H1 (cell line): ENCODE measurements at regions of chr1 and their contacts with region 1.

Region 1: GRCh38 chr1:175434283-175434860 is 241.8 kb upstream of the KIAA0040 start:
- DNase-seq: peak; percentile 17 to 80
- H3K4me3 ChIP-seq: no peak overlapping the region
- H3K27ac ChIP-seq: no peak overlapping the region
- H3K4me1 ChIP-seq: no peaks in the 10 kb centered on the region
- H3K27me3 ChIP-seq: no peaks in the 10 kb centered on the region
- CTCF ChIP-seq: peak; percentile 75 to 88 (median 85)
- EP300 ChIP-seq: no peak
- POLR2A ChIP-seq: no peak
- RAD21 ChIP-seq: peak; percentile 62 to 69

Region 2: GRCh38 chr1:175419744-175420546 is 14.4 kb before region 1 on chr1:
- CTCF ChIA-PET with region 1: interaction called, 46 read pairs
- POLR2A ChIA-PET with region 1: no interaction called
- DNase-seq: no peak
- H3K4me3 ChIP-seq: no peak overlapping the region
- H3K27ac ChIP-seq: no peak overlapping the region
- H3K4me1 ChIP-seq: no peaks in the 10 kb centered on the region; a peak in 1 of 7 replicates
- H3K27me3 ChIP-seq: no peaks in the 10 kb centered on the region
- CTCF ChIP-seq: no peak
- EP300 ChIP-seq: no peak
- POLR2A ChIP-seq: no peak
- RAD21 ChIP-seq: no peak

Region 3: DNA sequence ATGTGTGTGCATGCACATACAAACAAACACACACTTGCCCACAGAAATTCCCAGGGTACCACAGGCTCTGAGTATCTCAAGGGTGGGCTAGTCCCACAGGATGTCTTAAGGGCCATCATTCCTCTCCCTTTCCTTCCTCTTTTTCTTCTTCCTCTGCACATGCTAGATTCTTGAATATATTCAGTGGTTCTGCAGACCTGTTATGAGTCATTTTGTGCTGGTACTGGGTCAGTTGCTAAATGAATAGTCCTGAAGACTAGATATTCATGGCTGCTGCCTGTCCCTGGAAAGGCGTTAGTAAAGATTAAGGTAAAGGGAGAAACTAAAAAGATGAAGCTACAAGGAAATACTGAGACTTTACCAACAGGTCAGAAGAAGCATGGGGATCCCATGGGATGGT is 14.9 kb after region 1 on chr1:
- CTCF ChIA-PET with region 1: interaction called, 27 read pairs
- POLR2A ChIA-PET with region 1: no interaction called
- DNase-seq: no peak
- H3K4me3 ChIP-seq: no peak overlapping the region
- H3K27ac ChIP-seq: no peak overlapping the region
- H3K4me1 ChIP-seq: peaks cover 0 to 3% (median 0%) of the 10 kb centered on the region in 4 experiments; a peak in 1 of 7 replicates
- H3K27me3 ChIP-seq: no peaks in the 10 kb centered on the region; a peak in 1 of 7 replicates
- CTCF ChIP-seq: no peak
- EP300 ChIP-seq: no peak
- POLR2A ChIP-seq: no peak
- RAD21 ChIP-seq: no peak

Region 4: DNA sequence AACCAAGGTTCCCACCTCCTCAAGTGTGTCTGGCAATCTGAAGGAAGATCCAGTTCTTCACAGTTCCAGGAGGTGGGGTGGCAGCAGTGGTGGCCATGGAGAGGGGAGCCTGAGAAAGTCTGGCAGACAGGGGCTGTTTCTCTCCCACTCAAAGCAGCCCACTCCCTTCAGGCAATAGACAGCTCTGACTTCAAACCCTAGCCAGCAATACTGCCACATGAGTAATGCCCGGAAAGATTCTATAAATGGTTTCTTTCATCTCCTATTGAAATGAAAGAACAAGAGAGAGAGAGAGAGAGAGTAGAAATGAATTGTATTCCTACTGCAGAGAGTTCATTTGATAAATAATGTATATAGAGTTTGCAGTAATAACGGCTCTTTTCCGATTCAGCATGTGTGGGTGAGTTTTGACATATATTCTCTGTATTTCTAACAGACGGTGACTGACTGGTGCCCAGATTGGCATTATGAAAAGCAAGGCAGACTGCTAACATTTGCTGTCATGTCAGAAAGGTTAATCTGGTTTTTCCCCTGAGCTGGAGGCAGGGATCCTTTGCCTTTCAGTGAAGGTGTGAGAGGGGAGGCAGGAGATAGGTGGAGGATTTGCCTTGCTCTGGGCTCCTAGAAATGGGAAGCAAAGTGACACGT is 25.3 kb after region 1 on chr1:
- CTCF ChIA-PET with region 1: interaction called, 11 read pairs
- POLR2A ChIA-PET with region 1: no interaction called
- DNase-seq: no peak
- H3K4me3 ChIP-seq: no peak overlapping the region
- H3K27ac ChIP-seq: no peak overlapping the region
- H3K4me1 ChIP-seq: no peaks in the 10 kb centered on the region
- H3K27me3 ChIP-seq: peaks cover 0 to 3% (median 0%) of the 10 kb centered on the region in 4 experiments; a peak in 2 of 7 replicates
- CTCF ChIP-seq: no peak
- EP300 ChIP-seq: no peak
- POLR2A ChIP-seq: no peak
- RAD21 ChIP-seq: no peak

Region 5: GRCh38 chr1:175555266-175555665 is 120.9 kb after region 1 on chr1:
- CTCF ChIA-PET with region 1: no interaction called
- POLR2A ChIA-PET with region 1: no interaction called
- DNase-seq: no peak
- H3K4me3 ChIP-seq: no peak overlapping the region
- H3K27ac ChIP-seq: no peak overlapping the region
- H3K4me1 ChIP-seq: no peaks in the 10 kb centered on the region
- H3K27me3 ChIP-seq: no peaks in the 10 kb centered on the region
- CTCF ChIP-seq: no peak
- EP300 ChIP-seq: no peak
- POLR2A ChIP-seq: no peak
- RAD21 ChIP-seq: no peak